Activated CD8-positive, alpha-beta memory T cell treated with anti-CD3 and anti-CD28 coated beads, Interleukin-2, amount 10 ng/mL, durations not matched to agents 7 days and 5 days (primary cell): ENCODE measurements at regions of chr1 and their contacts with region 1.

Region 1: GRCh38 chr1:156728597-156729462 is at the start of gene ISG20L2:
- DNase-seq: peak; percentile 99
- ATAC-seq: peak; percentile 89
- H3K4me3 Mint-ChIP-seq: no peak within 1 kb of the TSS
- H3K27ac Mint-ChIP-seq: no peak within 1 kb of the TSS
- H3K4me1 Mint-ChIP-seq: peaks cover 29% of the 10 kb centered on the region
- H3K27me3 Mint-ChIP-seq: no peaks in the 10 kb centered on the region
- total RNA-seq, gene ISG20L2: 56.0 to 70.3 TPM

Region 2: GRCh38 chr1:156394835-156395461 is 333.9 kb before region 1 on chr1:
- CTCF ChIA-PET with region 1: no interaction called
- DNase-seq: no peak
- ATAC-seq: no peak
- H3K4me3 Mint-ChIP-seq: no peak overlapping the region
- H3K27ac Mint-ChIP-seq: no peak overlapping the region
- H3K4me1 Mint-ChIP-seq: no peaks in the 10 kb centered on the region
- H3K27me3 Mint-ChIP-seq: peaks cover 9% of the 10 kb centered on the region

Region 3: GRCh38 chr1:156540791-156541383 is 187.9 kb before region 1 on chr1:
- CTCF ChIA-PET with region 1: no interaction called
- DNase-seq: no peak
- ATAC-seq: no peak
- H3K4me3 Mint-ChIP-seq: no peak overlapping the region
- H3K27ac Mint-ChIP-seq: no peak overlapping the region
- H3K4me1 Mint-ChIP-seq: peaks cover 14% of the 10 kb centered on the region
- H3K27me3 Mint-ChIP-seq: no peaks in the 10 kb centered on the region

Region 4: DNA sequence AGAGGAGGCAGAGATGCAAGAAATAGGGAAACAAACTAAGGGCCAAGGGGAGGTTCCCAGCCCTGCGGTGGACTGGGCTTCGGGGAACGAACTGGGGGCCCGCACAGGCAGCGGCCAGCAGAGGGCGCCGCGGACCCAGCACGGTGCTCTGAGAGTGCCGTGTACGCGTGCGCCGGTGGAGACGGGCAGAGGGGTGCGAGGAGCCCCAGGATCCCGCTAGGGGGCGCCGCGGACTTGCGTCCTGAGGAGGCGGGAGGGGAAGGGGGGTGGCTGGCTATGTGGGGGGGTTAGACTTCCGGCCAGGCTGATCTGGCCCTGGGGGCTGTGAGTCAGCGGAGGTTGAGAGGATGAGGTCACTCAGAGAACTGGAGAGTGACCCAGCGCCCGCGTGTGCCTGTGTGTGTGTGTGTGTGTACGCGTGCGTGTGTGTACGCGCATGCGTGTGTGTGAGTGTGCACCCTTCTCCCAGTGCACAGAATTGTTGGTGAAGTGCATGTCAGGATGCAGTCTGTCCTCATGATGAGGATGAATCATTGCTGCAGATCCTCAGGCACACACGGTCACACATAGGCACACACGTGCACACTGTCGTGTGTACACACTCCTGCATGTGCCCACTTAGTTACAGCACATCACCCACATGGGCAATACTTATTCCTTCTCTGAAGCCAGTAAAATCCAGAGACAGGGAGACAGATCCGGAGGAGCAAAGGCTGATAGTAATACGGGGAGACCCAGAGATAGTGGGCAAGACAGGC is 68.7 kb before region 1 on chr1:
- CTCF ChIA-PET with region 1: interaction called, 57 read pairs
- DNase-seq: peak; percentile 97
- ATAC-seq: peak; percentile 81
- H3K4me3 Mint-ChIP-seq: peak overlapping the region; percentile 82
- H3K27ac Mint-ChIP-seq: peak overlapping the region; percentile 95
- H3K4me1 Mint-ChIP-seq: peaks cover 68% of the 10 kb centered on the region
- H3K27me3 Mint-ChIP-seq: peaks cover 24% of the 10 kb centered on the region

Region 5: DNA sequence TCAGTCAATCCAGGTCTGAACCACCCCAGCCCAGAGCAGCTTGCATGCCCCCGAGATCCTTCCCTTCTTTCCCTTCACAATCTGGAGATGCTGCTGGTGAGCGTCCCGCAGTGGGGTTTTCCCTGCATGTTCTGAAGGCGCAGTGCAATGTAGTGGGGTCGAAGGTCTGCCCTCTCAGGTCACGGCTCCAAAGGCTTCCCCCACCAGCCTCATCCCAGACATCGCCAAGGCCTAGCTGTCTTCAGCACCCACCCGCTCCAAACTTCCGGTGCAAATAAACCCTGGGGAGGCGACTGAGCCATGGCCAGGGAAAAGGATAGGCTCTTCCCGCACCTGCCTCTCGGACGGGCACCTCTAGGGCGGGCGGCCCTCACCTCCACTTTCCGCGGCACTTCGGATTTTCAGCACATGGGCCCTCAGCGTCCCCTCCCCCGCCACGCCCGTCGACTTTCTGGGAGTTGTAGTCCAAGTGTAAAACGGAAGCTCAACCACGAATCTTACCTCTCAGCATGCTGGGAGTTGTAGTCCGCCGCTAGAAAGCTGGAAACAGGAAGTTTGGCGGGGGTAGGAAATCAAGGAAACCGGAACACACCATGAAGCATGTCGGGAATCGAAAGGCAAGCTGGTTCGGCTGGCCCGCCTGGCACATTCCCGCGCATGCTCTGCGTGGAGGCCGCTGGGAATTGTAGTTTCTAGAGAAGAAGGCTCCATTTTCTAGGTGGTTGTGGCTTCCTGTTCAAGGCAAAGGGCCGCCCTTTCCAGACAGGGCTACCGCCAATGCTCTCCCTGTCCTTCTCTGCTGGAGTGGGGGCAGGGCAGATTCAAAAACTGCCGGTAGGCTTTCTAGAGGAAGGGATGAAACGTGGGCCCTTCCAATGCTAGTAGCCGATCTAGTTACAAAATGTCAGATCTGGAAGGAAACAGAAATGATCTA is 12.1 kb after region 1 on chr1 and contains the start of gene MRPL24:
- CTCF ChIA-PET with region 1: interaction called, 87 read pairs
- DNase-seq: peak; percentile 99
- ATAC-seq: peak; percentile 91
- H3K4me3 Mint-ChIP-seq: peak within 1 kb of the TSS; percentile 95
- H3K27ac Mint-ChIP-seq: peak within 1 kb of the TSS; percentile 96
- H3K4me1 Mint-ChIP-seq: peaks cover 61% of the 10 kb centered on the region
- H3K27me3 Mint-ChIP-seq: no peaks in the 10 kb centered on the region
- total RNA-seq, gene MRPL24: 60.4 to 80.0 TPM

Region 6: DNA sequence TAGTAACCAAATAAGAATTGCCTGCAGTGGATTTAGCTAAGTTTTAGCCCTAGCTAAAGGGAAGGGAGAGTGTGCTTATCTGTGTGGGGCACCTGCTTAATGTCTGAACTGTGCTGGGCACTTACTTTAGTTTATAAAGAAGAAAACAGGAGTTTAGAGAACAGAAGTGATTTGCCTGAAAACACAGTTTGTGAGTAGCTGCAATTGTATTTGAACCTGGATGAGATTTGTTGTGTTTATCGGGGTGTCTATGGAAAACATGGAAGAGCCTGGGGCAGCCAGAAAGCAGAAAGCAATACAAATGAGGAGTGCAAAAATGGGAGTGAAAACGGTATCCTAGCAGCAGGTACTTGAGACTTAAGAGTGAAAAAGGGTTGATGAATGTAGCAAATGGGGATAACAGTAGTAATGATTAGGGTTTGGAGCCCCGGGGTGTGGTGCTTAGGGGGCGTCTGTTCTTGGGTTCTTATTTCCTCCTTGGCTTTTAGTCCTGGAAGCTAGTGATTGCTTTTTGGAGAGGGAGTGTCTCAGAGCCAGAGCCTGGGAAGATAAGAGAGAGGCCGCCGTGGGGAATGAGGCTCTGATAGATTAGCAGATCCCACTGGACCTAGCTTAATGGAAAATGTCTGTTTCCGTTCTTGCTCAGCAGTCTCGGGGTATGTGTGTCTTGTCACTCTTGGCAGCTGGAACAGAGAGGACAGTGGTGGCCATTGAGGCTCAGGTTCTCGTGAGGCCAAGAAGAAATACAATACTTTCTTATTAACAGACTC is 44.1 kb after region 1 on chr1:
- CTCF ChIA-PET with region 1: interaction called, 116 read pairs
- DNase-seq: no peak
- ATAC-seq: peak; percentile 4
- H3K4me3 Mint-ChIP-seq: no peak overlapping the region
- H3K27ac Mint-ChIP-seq: peak overlapping the region; percentile 3
- H3K4me1 Mint-ChIP-seq: peaks cover 67% of the 10 kb centered on the region
- H3K27me3 Mint-ChIP-seq: no peaks in the 10 kb centered on the region

Region 7: DNA sequence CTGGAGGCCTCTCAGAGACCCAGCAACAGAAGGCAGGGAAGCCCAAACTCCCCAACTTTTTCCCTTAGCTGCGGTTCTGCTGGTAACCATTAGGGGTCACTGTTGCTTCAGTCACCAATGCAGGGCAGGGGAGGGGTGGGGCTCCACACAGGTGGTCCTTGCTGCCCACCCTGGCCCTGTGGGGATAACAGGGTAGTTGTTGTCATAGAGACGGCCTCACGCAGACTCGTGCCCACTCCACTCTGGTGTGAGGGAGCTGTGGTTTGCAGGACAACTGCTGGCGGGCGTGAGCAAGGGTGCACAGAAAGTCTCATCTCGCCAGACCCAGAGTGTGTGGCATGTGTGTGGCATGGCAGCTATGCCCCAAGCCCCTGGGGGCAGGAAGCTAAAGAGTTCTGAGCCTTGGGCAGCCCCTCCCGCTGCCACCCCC is 110.2 kb after region 1 on chr1:
- CTCF ChIA-PET with region 1: interaction called, 20 read pairs
- DNase-seq: peak; percentile 66
- ATAC-seq: peak; percentile 60
- H3K4me3 Mint-ChIP-seq: no peak overlapping the region
- H3K27ac Mint-ChIP-seq: no peak overlapping the region
- H3K4me1 Mint-ChIP-seq: peaks cover 37% of the 10 kb centered on the region
- H3K27me3 Mint-ChIP-seq: peaks cover 28% of the 10 kb centered on the region

Region 8: DNA sequence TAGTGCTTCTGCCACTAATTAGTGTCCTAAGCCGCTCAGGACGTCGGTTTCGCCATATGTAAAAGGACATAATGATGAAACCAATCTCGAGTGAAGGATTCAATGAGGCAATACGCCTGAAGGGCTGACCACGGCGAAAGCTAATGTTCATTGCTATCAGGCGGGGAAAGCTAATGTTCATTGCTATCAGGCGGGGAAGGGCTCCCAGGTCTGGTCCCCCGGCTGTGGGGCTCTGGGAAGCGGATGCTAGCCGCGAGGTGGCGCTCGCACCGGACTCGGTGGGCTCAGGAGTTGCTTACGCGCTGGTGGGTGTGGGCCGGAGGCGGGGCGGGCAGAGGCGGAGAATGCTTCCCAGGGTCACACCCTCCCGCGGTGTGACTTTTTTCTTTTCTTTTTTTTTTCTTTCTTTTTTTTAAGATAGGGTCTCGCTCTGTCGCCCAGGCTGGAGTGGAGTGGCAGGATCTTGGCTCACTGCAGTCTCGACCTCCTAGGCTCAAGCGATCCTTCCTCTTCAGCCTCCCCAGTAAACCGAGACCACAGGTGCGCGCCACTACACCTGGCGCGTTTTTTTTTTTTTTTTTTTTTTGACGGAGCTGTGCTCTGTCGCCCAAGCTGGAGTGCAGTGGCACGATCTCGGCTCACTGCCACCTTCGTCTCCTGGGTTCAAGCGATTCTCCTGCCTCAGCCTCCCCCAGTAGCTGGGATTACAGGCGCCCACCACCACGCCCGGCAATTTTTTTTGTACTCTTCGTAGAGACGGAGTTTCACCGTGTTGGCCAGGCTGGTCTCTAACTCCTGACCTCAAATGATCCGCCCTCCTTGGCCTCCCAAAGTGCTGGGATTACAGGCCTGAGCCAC is 163.6 kb after region 1 on chr1:
- CTCF ChIA-PET with region 1: interaction called, 55 read pairs
- DNase-seq: peak; percentile 91
- ATAC-seq: peak; percentile 97
- H3K4me3 Mint-ChIP-seq: peak overlapping the region; percentile 39
- H3K27ac Mint-ChIP-seq: no peak overlapping the region
- H3K4me1 Mint-ChIP-seq: peaks cover 12% of the 10 kb centered on the region
- H3K27me3 Mint-ChIP-seq: peaks cover 68% of the 10 kb centered on the region